ENCODE measurements at regions of chr13 and their contacts with region 1.

Region 1: GRCh38 chr13:95296326-95296925 is 4.8 kb downstream of the ABCC4 start:
- DNase-seq: no peak
- H3K4me3 ChIP-seq: no peak overlapping the region
- H3K27ac ChIP-seq: no peak overlapping the region
- H3K4me1 ChIP-seq: no peaks in the 10 kb centered on the region
- H3K27me3 ChIP-seq: no peaks in the 10 kb centered on the region
- CTCF ChIP-seq: peak in 2 of 3 experiments; percentile 31 to 48

Region 2: DNA sequence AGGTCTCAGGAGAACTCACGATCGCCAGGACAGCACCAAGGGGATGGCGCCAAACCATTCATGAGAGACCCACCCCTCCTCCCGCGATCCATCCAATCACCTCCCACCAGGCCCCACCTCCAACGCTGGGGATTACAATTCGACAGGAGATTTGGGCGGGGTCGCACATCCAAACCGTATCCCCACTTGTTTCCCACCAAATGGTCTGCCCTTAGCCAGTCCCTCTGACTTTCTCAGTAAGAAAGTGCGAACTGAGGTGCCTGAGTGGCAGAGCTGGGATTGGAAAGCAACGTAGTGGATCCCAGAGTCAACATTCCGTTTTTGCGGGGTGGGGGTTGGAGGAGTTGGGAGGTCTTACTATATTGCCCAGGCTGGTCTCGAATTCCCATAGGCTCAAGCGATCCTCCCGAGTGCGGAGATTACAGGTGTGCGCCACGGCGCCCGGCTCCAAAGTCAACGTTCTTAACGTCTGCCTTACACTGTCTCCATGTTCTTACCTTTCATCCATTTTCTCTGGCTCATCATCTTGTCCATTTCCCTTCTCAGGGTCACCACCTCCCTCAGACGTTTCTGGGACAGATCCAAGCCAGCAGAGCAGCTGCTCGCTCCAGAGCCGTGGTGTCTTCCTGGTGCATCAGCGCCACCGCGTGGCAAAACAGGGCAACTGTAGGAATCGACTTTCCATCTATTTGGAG is 107.5 kb after region 1 on chr13:
- intact Hi-C with region 1: loop called (anchors 10 kb)
- DNase-seq: peak; percentile 23 to 86
- H3K4me3 ChIP-seq: peak overlapping the region; percentile 49 to 64
- H3K27ac ChIP-seq: no peak overlapping the region
- H3K4me1 ChIP-seq: no peaks in the 10 kb centered on the region
- H3K27me3 ChIP-seq: no peaks in the 10 kb centered on the region
- CTCF ChIP-seq: peak; percentile 77 to 94 (median 86)